ENCODE measurements at regions of chr12 and their contacts with region 1.

Region 1: GRCh38 chr12:57123813-57124212 is 4.5 kb upstream of the LRP1 start:
- DNase-seq: no peak
- H3K4me3 ChIP-seq: no peak overlapping the region
- CTCF ChIP-seq: no peak
- POLR2A ChIP-seq: no peak

Region 2: GRCh38 chr12:56041552-56042429 is 1082.0 kb before region 1 on chr12 and contains the start of gene RPS26:
- intact Hi-C with region 1: no loop called
- DNase-seq: peak; percentile 96 to 98
- H3K4me3 ChIP-seq: peak within 1 kb of the TSS; percentile 82
- CTCF ChIP-seq: no peak
- POLR2A ChIP-seq: peak in 1 of 2 donors; percentile 91
- total RNA-seq, gene RPS26: 390 to 2,886 (median 552) TPM

Region 3: DNA sequence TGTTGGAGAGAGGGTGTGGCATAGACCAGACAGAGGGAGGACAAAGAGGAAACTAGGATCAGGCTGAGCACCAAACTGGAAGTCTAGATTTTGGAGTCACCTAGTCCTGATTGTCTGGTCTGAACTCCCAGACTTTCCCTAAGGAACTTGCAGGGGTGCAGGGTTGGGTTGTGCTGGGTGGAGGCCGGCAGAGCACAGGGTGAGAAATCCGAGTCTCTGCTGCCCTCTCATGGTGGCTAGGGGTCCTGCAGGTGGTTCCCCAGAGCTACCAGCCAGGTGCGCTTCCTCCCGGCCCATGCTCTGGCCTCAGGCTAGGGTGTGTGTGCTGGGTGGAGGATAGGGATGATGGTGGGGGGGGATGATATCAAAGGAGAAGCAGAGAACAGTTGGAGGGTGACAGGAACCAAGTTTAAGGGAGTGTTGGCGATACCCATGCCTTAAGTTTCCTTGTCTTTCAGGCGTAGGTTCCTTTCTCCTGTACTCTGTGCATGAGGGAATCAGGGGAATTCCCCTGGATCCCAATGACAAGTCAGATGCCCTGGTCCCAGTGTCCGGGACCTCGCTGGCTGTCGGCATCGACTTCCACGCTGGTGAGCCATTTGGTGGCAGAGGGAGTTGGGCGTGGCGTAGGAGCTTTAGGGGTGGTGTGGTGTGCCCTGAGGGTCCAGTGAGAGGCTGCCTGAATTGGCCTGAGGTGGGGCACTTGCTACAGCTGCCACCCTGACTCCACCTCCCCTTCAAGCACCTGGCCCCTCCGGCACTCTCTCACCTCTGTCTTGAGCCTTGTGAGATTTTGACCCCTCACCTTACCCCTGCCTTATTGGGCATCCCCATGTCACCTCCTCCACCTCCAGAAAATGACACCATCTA is 59.3 kb after region 1 on chr12:
- intact Hi-C with region 1: loop called (anchors 2 kb)
- DNase-seq: peak; percentile 74 to 96
- H3K4me3 ChIP-seq: no peak overlapping the region
- CTCF ChIP-seq: peak in 1 of 3 donors; percentile 94
- POLR2A ChIP-seq: no peak